SK-N-SH (cell line): ENCODE measurements at regions of chr5 and their contacts with region 1.

Region 1: GRCh38 chr5:41768692-41769091 is 101.5 kb downstream of the OXCT1 start:
- DNase-seq: no peak
- H3K4me3 ChIP-seq: no peak overlapping the region
- H3K27ac ChIP-seq: no peak overlapping the region
- H3K4me1 ChIP-seq: peaks cover 14 to 21% of the 10 kb centered on the region in 2 experiments; a peak in 3 of 4 replicates
- H3K27me3 ChIP-seq: no peaks in the 10 kb centered on the region
- CTCF ChIP-seq: no peak
- EP300 ChIP-seq: no peak
- RAD21 ChIP-seq: no peak

Region 2: DNA sequence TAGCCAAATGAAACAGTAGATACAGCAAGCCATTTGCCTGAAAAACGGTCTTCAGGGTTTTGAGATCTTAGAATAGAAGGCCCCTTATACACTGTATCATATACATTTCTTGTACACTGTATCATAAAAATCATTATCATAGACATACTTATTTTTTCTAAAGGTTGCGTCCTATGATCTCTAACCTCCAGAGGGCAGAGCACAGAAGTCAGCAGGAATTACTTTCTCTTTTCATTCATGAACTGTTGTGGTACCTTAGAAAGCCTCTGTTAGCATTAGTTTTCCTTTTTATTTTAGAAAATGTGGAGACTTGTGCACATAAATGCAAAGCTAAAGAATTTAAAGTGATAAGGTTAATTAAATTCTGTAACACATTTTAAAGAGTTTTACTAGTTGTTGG is 13.8 kb before region 1 on chr5:
- CTCF ChIA-PET with region 1: interaction called, 11 read pairs
- POLR2A ChIA-PET with region 1: interaction called, 3 read pairs
- DNase-seq: no peak
- H3K4me3 ChIP-seq: no peak overlapping the region
- H3K27ac ChIP-seq: no peak overlapping the region
- H3K4me1 ChIP-seq: peaks cover 0 to 6% of the 10 kb centered on the region in 2 experiments; a peak in 3 of 4 replicates
- H3K27me3 ChIP-seq: no peaks in the 10 kb centered on the region
- CTCF ChIP-seq: peak; percentile 57
- EP300 ChIP-seq: no peak
- RAD21 ChIP-seq: peak; percentile 46; the same call in 1 of the 2 replicates